AG04450 (cell line): ENCODE measurements at regions of chr15 and their contacts with region 1.

Region 1: DNA sequence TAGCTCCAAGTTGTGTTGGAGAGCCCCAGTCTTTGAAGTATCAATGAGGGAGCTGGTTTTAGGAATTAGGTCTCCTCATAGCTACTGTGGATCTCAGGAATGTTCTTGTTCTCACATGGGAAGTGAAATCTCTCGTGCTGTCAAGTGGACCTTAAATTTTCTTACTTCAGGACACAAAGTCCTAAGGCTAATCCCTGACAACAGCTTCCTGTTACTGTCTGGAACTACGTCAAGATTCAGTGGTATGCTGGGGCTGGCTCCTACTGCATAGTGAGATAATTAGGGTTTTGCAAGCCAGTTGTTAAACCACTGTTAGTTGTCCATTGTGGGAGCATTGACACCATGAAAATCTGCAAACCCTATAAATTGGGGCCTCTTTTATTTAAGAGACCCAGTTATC is 22.8 kb downstream of the MESP1 start:
- DNase-seq: no peak
- H3K4me3 ChIP-seq: no peak overlapping the region
- H3K27ac ChIP-seq: no peak overlapping the region
- H3K27me3 ChIP-seq: peaks cover 36% of the 10 kb centered on the region
- CTCF ChIP-seq: no peak

Region 2: GRCh38 chr15:89681146-89681545 is 47.1 kb before region 1 on chr15:
- CTCF ChIA-PET with region 1: no interaction called
- POLR2A ChIA-PET with region 1: interaction called, 13 read pairs
- DNase-seq: no peak
- H3K4me3 ChIP-seq: no peak overlapping the region
- H3K27ac ChIP-seq: no peak overlapping the region
- H3K27me3 ChIP-seq: no peaks in the 10 kb centered on the region
- CTCF ChIP-seq: no peak